Left cardiac atrium (tissue), 4 donors: ENCODE measurements at regions of chr12 and their contacts with region 1.

Region 1: DNA sequence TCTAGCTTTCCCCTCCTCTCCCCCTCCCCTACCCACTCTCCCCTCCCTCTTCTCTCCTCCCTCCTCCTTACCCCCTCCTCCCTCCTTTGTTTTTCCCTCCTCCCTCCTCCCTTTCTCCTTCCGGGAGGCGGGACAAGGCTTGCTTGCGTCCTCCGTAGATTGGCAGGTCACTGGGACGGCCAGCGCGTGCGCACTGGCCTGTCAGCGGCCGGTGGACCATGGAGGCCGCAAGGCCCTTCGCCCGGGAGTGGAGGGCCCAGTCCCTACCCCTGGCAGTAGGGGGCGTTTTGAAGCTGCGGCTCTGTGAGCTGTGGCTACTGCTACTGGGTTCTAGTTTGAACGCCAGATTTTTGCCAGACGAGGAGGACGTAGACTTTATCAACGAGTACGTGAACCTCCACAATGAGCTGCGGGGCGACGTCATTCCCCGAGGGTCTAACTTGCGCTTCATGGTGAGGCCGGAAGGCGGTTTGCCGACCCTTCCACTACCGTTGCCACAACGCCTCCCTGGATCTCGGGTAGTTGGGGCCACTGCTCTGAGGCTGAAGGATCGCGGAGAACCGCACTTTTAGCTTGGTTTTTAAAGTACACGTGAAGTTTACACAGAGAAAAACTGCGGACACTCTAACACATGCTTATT is at the start of gene GLIPR1L2:
- DNase-seq: peak; percentile 95
- ATAC-seq: peak; percentile 100
- total RNA-seq, gene GLIPR1L2: 0.92 to 1.7 TPM

Region 2: DNA sequence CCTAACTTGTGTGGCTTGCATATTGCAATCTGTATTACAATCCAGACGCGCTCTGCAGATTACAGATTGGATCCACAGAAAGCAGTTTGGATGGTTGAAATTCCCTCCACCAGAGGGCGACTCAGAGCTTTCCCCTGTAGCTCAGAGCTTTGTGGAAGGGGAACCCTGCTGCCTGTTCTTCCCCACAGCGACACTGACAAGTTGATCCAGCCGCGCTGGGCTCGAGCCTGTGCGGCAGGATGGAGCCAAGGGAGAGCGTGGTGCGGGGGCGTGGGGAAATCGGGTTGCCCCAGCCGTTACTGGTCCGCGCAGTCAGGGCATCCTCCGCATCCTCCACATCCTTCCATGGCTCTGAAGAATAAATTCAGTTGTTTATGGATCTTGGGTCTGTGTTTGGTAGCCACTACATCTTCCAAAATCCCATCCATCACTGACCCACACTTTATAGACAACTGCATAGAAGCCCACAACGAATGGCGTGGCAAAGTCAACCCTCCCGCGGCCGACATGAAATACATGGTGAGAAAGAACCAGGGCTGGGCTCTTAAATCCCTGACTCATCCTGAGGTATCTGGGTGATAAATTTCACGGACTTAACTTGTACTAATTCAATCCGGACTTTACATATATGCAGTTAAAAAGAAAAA is 56.5 kb before region 1 on chr12 and contains the start of gene GLIPR1L1:
- intact Hi-C with region 1: loop called in 1 of 2 experiments (anchors 5 kb)
- DNase-seq: peak; percentile 88
- ATAC-seq: peak; percentile 88 to 91
- total RNA-seq, gene GLIPR1L1: not detected

Region 3: DNA sequence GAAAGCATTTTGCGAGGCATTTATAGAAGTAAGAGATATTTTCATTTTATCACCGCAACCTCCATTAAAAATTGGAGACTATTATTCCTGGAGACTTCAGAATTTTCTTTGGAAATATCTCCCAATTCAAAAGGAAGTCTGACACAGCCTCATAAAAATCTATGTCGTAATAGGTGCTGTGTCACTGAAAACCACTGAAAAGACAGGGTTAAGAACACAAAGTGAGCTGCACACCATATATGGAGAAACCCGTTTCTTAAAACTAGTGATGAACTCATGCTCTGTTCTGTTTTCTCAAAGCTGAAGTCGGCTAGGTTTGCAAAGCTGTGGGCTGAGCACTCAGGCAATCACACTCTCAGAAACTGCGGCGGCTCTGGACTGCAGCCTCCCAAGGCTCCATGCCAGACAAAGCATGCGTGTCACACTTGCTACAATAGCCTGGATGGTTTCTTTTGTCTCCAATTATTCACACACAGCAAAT is 89.5 kb after region 1 on chr12 and contains the start of gene GLIPR1:
- intact Hi-C with region 1: loop called in 1 of 2 experiments (anchors 10 kb)
- DNase-seq: peak; percentile 77
- ATAC-seq: peak; percentile 89 to 95
- total RNA-seq, gene GLIPR1: 20.2 to 28.8 TPM